Dorsolateral prefrontal cortex (tissue), 120 donors: ENCODE measurements at regions of chr6 and their contacts with region 1.

Region 1: DNA sequence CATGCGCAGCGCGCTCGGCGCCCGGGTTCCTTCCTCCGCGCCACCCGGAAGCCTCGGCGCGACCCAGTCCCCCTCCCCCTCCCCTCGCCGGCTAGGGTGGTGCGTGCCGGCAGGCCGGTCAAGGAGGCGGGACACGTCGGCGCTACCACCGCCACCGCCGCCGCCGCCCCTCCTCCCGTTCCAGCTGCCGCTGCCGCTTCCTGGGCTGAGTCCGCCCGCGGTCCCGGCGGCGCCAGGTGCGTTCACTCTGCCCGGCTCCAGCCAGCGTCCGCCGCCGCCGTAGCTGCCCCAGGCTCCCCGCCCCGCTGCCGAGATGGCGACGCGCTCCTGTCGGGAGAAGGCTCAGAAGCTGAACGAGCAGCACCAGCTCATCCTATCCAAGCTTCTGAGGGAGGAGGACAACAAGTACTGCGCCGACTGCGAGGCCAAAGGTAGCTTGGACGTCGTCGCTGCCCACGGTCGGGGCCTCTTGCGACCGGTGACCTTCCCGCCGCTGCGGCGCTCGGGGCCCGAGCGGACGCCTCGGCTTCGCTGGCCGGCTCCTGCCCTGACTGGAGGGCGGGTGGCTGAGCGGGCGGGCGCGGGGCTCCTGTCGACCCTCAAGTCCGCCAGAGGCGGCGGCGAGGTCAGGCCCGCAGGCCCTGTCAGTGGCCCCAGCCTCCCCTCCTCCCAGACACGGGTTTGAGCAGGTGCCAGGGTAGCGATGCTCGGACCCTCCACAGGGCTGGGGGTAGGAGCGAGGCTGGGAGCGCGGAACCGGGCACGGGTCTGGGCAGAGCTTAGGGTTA is at the start of gene SMAP1:
- DNase-seq: peak; percentile 73 to 94 (median 88)
- H3K4me3 ChIP-seq: peak within 1 kb of the TSS; percentile 60 to 99 (median 92)
- H3K27ac ChIP-seq: peak within 1 kb of the TSS; percentile 53 to 98 (median 91)
- H3K27me3 ChIP-seq: no peaks in the 10 kb centered on the region
- CTCF ChIP-seq: peak in 19 of 56 donors; percentile 4 to 53 (median 27)
- total RNA-seq, gene SMAP1: 30.9 to 64.8 (median 47.9) TPM

Region 2: DNA sequence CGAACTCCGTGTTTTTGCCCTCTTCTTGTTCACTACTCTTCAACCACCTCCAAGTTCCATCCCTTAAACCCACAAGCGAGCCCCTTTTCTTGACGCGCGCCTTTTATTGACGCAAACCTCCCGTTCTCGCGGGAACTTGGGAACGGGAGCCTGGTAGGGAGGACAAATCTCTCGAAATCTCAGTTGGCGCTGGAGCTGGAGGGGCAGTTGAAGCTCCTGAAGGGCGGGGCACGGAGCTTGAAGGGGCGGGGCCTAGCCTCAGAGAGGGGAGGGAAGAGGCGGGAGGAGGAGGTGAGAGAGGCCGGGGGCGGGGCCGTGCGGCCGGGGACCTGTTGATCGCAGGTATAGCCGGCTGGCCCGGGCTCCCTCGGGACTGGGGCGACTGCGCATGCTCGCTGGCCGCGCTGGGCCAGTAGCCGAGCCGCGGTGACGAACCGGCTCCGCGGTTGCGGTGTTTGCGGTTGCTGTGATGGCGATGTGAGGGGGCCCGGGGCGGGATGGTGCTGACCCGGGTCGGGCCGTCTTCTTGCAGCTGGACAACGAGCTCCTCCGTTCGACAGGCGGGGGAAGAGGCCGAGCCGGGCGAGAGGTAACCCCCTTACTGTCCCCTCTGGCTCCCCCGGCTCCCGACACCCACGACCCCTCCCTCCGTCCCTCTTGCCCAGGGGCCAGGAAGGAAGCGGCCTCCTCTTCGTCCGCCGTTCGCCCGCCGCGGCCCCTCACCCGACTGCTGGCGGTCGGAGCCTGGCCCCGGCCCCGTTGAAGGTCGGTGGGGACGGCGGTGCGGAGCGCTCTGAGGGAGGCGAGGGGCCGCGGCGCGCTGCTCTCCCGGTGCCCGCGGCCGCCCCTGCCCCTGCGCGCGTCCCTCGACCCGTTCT is 254.6 kb before region 1 on chr6 and contains the start of gene FAM135A:
- intact Hi-C with region 1: loop called (anchors 5 kb)
- DNase-seq: peak; percentile 85 to 99 (median 96)
- H3K4me3 ChIP-seq: peak within 1 kb of the TSS; percentile 55 to 99 (median 91)
- H3K27ac ChIP-seq: peak within 1 kb of the TSS; percentile 13 to 96 (median 88)
- H3K27me3 ChIP-seq: no peaks in the 10 kb centered on the region
- CTCF ChIP-seq: peak in 12 of 56 donors; percentile 5 to 33 (median 14)
- total RNA-seq, gene FAM135A: 34.3 to 72.1 (median 49.1) TPM

Region 3: GRCh38 chr6:70520575-70520974 is 147.3 kb before region 1 on chr6:
- intact Hi-C with region 1: no loop called
- DNase-seq: no peak
- H3K4me3 ChIP-seq: no peak overlapping the region
- H3K27ac ChIP-seq: no peak overlapping the region
- H3K27me3 ChIP-seq: no peaks in the 10 kb centered on the region
- CTCF ChIP-seq: peak in 24 of 56 donors; percentile 8 to 51 (median 21)

Region 4: GRCh38 chr6:70547313-70547712 is 120.6 kb before region 1 on chr6:
- intact Hi-C with region 1: no loop called
- DNase-seq: no peak
- H3K4me3 ChIP-seq: no peak overlapping the region
- H3K27ac ChIP-seq: no peak overlapping the region
- H3K27me3 ChIP-seq: no peaks in the 10 kb centered on the region
- CTCF ChIP-seq: peak in 53 of 56 donors; percentile 20 to 75 (median 50)